ENCODE measurements at regions of chr16 and their contacts with region 1.

Region 1: DNA sequence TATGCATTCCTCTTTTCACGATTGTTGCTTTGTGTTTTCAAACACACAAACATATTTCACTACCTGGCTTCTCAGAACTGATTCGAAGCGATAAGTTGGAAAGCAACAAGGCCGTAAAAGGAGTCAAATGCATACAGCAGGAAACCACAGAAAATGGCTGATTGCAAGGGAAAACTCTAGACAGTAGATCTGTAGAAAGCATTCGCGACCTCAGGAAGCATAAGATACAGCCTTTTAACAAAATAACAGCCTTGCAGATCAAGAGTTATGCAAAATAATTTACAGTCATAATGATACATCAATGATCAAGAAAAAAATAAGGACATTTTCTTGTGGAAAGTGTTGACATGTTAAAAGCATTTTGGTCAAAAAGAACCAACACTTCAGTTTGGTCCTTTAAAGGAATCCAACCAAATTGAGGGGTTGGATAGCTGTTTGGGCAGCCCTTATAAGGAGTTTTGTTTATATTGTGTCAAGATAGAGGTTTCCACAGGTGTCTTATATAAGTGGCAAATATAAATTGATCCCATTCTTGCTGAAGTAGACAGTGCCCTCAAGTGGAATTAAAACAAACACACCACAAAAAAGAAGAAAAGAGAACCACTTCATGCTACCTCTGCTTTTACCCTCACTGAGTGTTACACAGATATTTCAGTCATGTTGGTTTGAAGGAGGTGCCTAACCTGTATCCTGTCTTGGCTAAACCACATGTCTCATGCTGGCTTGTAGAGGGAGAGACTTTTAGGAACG is 5.5 kb downstream of the CYLD start:
- DNase-seq: peak; percentile 64 to 75 (median 70)
- H3K4me3 ChIP-seq: peak overlapping the region; percentile 26 to 48
- H3K4me3 Mint-ChIP-seq: peak overlapping the region; percentile 83 to 96 (median 90)
- H3K27ac ChIP-seq: peak overlapping the region; percentile 59
- H3K27ac Mint-ChIP-seq: peak overlapping the region; percentile 95 to 99 (median 97)
- H3K4me1 ChIP-seq: peaks cover 77% of the 10 kb centered on the region
- H3K4me1 Mint-ChIP-seq: peaks cover 37 to 83% (median 55%) of the 10 kb centered on the region in 4 donors
- H3K27me3 ChIP-seq: no peaks in the 10 kb centered on the region
- H3K27me3 Mint-ChIP-seq: no peaks in the 10 kb centered on the region

Region 2: DNA sequence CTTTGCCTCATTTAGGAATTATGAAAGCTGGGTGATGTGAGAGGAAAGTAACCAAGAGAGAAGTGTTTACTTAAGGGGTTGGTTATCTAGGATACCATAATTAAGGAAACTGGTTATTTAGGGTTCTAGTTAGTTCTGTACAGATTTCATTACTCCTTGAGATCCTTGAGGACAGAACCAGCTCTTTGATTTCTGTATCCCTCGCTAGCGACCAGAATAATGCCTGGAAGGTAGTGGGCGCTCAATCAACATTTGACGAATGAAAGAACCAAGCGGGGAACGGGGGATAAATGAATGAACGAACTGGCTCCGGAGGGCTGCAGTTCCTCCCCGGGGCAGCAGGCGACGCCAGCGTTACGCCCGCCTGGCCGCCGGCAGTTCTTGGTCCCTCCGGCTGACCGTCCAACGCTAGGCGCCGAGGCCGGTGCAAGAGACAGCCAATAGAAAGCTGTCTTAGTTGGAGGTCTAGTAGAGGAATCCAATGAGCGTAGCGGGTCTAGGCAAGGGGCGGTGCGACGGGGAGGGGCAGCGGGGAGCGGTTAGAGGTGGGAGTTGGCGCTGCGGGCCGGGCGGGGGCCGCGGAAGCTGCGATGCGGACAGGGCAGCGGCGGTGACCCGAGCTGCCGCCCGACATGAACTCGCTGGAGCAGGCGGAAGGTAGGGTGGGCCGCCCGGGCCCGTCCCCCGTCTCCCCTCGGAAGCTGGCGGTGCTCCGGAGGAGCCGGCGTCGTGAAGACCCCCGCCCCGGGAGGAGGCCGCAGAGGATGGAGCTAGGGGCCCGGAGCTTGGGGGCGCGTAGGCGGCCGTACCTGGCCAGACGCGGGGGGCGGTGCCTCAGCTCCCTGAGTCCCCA is 722.5 kb before region 1 on chr16 and contains the start of gene CNEP1R1:
- CTCF ChIA-PET with region 1: interaction called, 8 read pairs
- POLR2A ChIA-PET with region 1: interaction called, 6 read pairs
- intact Hi-C with region 1: loop called (anchors 5 kb)
- DNase-seq: peak; percentile 93 to 97 (median 95)
- H3K4me3 ChIP-seq: peak within 1 kb of the TSS; percentile 76 to 85
- H3K4me3 Mint-ChIP-seq: peak within 1 kb of the TSS; percentile 94 to 99 (median 96)
- H3K27ac ChIP-seq: peak within 1 kb of the TSS; percentile 75
- H3K27ac Mint-ChIP-seq: peak within 1 kb of the TSS; percentile 91 to 99 (median 96)
- H3K4me1 ChIP-seq: peaks cover 34% of the 10 kb centered on the region
- H3K4me1 Mint-ChIP-seq: peaks cover 18 to 32% (median 24%) of the 10 kb centered on the region in 4 donors
- H3K27me3 ChIP-seq: no peaks in the 10 kb centered on the region
- H3K27me3 Mint-ChIP-seq: peaks cover 0 to 4% of the 10 kb centered on the region in 2 donors
- total RNA-seq, gene CNEP1R1: 34.2 to 40.8 TPM

Region 3: GRCh38 chr16:50326949-50327402 is 420.4 kb before region 1 on chr16:
- CTCF ChIA-PET with region 1: interaction called, 16 read pairs
- POLR2A ChIA-PET with region 1: interaction called, 15 read pairs
- intact Hi-C with region 1: loop called (anchors 1 kb)
- DNase-seq: peak; percentile 80 to 90 (median 84)
- H3K4me3 ChIP-seq: no peak overlapping the region
- H3K4me3 Mint-ChIP-seq: peak overlapping the region in 4 of 8 donors; percentile 37 to 70 (median 44)
- H3K27ac ChIP-seq: peak overlapping the region; percentile 51
- H3K27ac Mint-ChIP-seq: peak overlapping the region; percentile 74 to 98 (median 90)
- H3K4me1 ChIP-seq: peaks cover 32% of the 10 kb centered on the region
- H3K4me1 Mint-ChIP-seq: peaks cover 34 to 71% (median 38%) of the 10 kb centered on the region in 4 donors
- H3K27me3 ChIP-seq: no peaks in the 10 kb centered on the region
- H3K27me3 Mint-ChIP-seq: no peaks in the 10 kb centered on the region

Region 4: DNA sequence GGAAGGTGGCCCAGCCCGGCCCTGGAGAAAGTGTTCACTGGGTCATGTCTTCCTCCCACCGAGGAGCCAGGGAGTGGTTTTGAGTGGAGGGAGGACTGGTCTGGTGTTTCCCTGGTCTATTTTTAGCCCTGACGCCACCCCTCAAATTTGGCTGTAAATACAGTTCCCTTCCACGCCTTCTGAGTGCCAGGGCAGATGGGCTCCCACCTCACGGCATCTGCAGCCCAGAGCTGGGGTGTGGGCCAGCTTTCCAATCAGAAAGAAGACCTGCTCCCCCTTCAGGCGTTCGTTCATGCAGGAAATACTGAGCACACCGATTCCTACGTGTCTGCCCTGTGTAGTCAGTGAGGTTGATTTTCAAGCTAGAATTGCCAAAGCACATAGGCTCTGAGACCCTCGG is 120.0 kb before region 1 on chr16:
- CTCF ChIA-PET with region 1: interaction called, 4 read pairs
- POLR2A ChIA-PET with region 1: no interaction called
- intact Hi-C with region 1: loop called (anchors 1 kb)
- DNase-seq: peak; percentile 32 to 48 (median 36)
- H3K4me3 ChIP-seq: no peak overlapping the region
- H3K4me3 Mint-ChIP-seq: peak overlapping the region in 7 of 8 donors; percentile 64 to 90 (median 78)
- H3K27ac ChIP-seq: no peak overlapping the region
- H3K27ac Mint-ChIP-seq: peak overlapping the region in 6 of 7 donors; percentile 64 to 87 (median 80)
- H3K4me1 ChIP-seq: peaks cover 25% of the 10 kb centered on the region
- H3K4me1 Mint-ChIP-seq: peaks cover 23 to 39% (median 31%) of the 10 kb centered on the region in 4 donors
- H3K27me3 ChIP-seq: no peaks in the 10 kb centered on the region
- H3K27me3 Mint-ChIP-seq: no peaks in the 10 kb centered on the region

Region 5: DNA sequence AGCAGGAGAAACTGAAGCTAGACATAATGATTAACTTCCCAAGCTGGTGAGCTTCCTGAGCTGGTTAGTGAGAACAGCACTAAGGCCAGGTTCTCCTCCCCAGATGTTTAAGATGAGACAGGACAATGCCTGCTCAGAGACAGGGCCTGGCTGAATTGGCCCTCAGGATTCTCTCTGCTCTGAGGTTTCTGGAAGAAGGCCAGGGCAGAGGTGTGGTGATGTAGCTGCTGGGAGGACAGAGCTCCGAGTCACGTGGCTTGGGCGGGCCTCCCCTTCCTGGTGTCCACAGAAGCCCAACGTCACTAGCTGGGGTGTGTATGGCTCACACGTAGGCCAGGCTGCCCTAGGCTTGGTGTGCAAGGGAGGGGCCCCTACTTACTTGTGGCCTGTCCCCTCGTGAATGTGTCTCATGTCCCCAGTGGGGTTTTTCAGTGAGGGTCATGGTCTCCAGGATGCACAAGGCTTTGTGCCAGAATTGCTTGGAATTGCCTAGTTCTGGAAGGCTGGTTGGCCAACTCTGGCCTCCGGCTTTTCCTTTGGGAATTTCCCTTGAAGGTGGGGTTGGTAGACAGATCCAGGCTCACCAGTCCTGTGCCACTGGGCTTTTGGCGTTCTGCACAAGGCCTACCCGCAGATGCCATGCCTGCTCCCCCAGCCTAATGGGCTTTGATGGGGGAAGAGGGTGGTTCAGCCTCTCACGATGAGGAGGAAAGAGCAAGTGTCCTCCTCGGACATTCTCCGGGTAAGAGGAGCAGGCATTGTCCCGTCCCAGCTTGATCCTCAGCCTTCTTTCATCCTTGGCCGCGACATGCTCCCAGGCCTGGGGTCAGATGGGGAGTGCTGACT is 50.6 kb before region 1 on chr16:
- CTCF ChIA-PET with region 1: interaction called, 5 read pairs
- POLR2A ChIA-PET with region 1: interaction called, 67 read pairs
- intact Hi-C with region 1: loop called (anchors 2 kb)
- DNase-seq: peak; percentile 67 to 90 (median 71)
- H3K4me3 ChIP-seq: peak overlapping the region; percentile 48 to 89
- H3K4me3 Mint-ChIP-seq: peak overlapping the region; percentile 87 to 96 (median 93)
- H3K27ac ChIP-seq: peak overlapping the region; percentile 88
- H3K27ac Mint-ChIP-seq: peak overlapping the region; percentile 85 to 99 (median 95)
- H3K4me1 ChIP-seq: peaks cover 79% of the 10 kb centered on the region
- H3K4me1 Mint-ChIP-seq: peaks cover 60 to 93% (median 81%) of the 10 kb centered on the region in 4 donors
- H3K27me3 ChIP-seq: no peaks in the 10 kb centered on the region
- H3K27me3 Mint-ChIP-seq: no peaks in the 10 kb centered on the region

Region 6: DNA sequence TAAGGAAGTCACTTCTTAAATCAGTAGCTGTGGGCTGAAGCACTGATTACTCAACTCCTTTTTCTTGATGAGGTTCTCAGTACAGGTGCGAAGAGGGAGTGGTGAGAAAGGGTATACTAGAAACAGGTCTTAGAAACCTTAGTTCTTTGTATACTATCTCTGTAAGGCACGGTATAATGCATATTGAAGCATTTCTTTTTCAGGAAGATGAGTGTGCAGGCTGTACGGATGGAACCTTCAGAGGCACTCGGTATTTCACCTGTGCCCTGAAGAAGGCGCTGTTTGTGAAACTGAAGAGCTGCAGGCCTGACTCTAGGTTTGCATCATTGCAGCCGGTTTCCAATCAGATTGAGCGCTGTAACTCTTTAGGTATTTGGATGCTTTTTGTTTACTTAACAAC is 33.7 kb after region 1 on chr16:
- CTCF ChIA-PET with region 1: interaction called, 10 read pairs
- POLR2A ChIA-PET with region 1: interaction called, 15 read pairs
- intact Hi-C with region 1: loop called (anchors 5 kb)
- DNase-seq: peak in 4 of 5 donors; percentile 33 to 59 (median 49)
- H3K4me3 ChIP-seq: no peak overlapping the region
- H3K4me3 Mint-ChIP-seq: peak overlapping the region; percentile 40 to 86 (median 77)
- H3K27ac ChIP-seq: peak overlapping the region; percentile 32
- H3K27ac Mint-ChIP-seq: peak overlapping the region; percentile 88 to 98 (median 95)
- H3K4me1 ChIP-seq: peaks cover 63% of the 10 kb centered on the region
- H3K4me1 Mint-ChIP-seq: peaks cover 40 to 74% (median 53%) of the 10 kb centered on the region in 4 donors
- H3K27me3 ChIP-seq: no peaks in the 10 kb centered on the region
- H3K27me3 Mint-ChIP-seq: no peaks in the 10 kb centered on the region